Esophagus squamous epithelium (tissue), 5 donors: ENCODE measurements at regions of chr22 and their contacts with region 1.

Region 1: GRCh38 chr22:27892064-27892463 is 27.0 kb downstream of the PITPNB start:
- DNase-seq: no peak
- H3K4me3 ChIP-seq: no peak overlapping the region
- H3K27ac ChIP-seq: peak overlapping the region in 3 of 4 donors; percentile 19 to 68 (median 51)
- H3K4me1 ChIP-seq: peaks cover 0 to 16% (median 5%) of the 10 kb centered on the region in 3 donors
- H3K27me3 ChIP-seq: no peaks in the 10 kb centered on the region
- CTCF ChIP-seq: no peak
- POLR2A ChIP-seq: no peak

Region 2: GRCh38 chr22:28009272-28009827 is 117.3 kb after region 1 on chr22:
- intact Hi-C with region 1: loop called (anchors 5 kb)
- DNase-seq: no peak
- H3K4me3 ChIP-seq: no peak overlapping the region
- H3K27ac ChIP-seq: peak overlapping the region; percentile 44 to 89 (median 62)
- H3K4me1 ChIP-seq: peaks cover 8 to 72% (median 29%) of the 10 kb centered on the region in 3 donors
- H3K27me3 ChIP-seq: no peaks in the 10 kb centered on the region
- CTCF ChIP-seq: peak; percentile 84 to 96 (median 92)
- POLR2A ChIP-seq: no peak